HCT116 (cell line): ENCODE measurements at regions of chrX and their contacts with region 1.

Region 1: GRCh38 chrX:118627084-118627758 is 100.2 kb upstream of the IL13RA1 start:
- DNase-seq: no peak
- ATAC-seq: peak; percentile 68
- H3K4me3 ChIP-seq: no peak overlapping the region
- H3K27ac ChIP-seq: no peak overlapping the region
- H3K4me1 ChIP-seq: no peaks in the 10 kb centered on the region
- H3K27me3 ChIP-seq: no peaks in the 10 kb centered on the region
- CTCF ChIP-seq: peak; percentile 28 to 59 (median 51); a peak in 5 of 6 replicates
- POLR2A ChIP-seq: no peak
- RAD21 ChIP-seq: peak; percentile 55

Region 2: DNA sequence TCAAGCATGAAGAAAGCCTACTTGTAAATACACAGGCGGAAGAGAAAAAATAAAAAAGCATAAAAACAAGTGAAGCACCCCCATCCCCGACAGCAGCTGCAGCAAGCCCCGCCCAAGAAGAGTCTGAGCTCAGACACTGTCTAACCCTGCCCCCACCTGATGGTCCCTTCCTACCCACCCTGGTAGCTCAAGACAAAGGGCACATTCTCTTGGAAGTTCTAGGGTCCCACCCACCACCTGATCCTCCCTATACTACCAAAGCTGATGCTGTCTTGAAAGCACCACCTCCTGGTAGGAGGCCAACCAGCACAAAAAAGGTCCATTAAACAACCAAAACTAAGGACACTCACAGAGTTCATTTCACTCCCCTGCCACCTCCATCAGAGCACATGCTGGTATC is 818.8 kb before region 1 on chrX:
- CTCF ChIA-PET with region 1: no interaction called
- POLR2A ChIA-PET with region 1: no interaction called
- RAD21 ChIA-PET with region 1: no interaction called
- intact Hi-C with region 1: loop called (anchors 10 kb)
- DNase-seq: no peak
- ATAC-seq: no peak
- H3K4me3 ChIP-seq: no peak overlapping the region
- H3K27ac ChIP-seq: no peak overlapping the region
- H3K4me1 ChIP-seq: no peaks in the 10 kb centered on the region
- H3K27me3 ChIP-seq: no peaks in the 10 kb centered on the region
- CTCF ChIP-seq: no peak
- POLR2A ChIP-seq: no peak
- RAD21 ChIP-seq: no peak

Region 3: GRCh38 chrX:119529345-119530276 is 902.4 kb after region 1 on chrX:
- CTCF ChIA-PET with region 1: no interaction called
- POLR2A ChIA-PET with region 1: no interaction called
- RAD21 ChIA-PET with region 1: no interaction called
- intact Hi-C with region 1: no loop called
- DNase-seq: no peak
- ATAC-seq: no peak
- H3K4me3 ChIP-seq: no peak overlapping the region
- H3K27ac ChIP-seq: no peak overlapping the region
- H3K4me1 ChIP-seq: no peaks in the 10 kb centered on the region
- H3K27me3 ChIP-seq: no peaks in the 10 kb centered on the region
- CTCF ChIP-seq: no peak
- POLR2A ChIP-seq: no peak
- RAD21 ChIP-seq: no peak